ENCODE measurements at regions of chr5 and their contacts with region 1.

Region 1: DNA sequence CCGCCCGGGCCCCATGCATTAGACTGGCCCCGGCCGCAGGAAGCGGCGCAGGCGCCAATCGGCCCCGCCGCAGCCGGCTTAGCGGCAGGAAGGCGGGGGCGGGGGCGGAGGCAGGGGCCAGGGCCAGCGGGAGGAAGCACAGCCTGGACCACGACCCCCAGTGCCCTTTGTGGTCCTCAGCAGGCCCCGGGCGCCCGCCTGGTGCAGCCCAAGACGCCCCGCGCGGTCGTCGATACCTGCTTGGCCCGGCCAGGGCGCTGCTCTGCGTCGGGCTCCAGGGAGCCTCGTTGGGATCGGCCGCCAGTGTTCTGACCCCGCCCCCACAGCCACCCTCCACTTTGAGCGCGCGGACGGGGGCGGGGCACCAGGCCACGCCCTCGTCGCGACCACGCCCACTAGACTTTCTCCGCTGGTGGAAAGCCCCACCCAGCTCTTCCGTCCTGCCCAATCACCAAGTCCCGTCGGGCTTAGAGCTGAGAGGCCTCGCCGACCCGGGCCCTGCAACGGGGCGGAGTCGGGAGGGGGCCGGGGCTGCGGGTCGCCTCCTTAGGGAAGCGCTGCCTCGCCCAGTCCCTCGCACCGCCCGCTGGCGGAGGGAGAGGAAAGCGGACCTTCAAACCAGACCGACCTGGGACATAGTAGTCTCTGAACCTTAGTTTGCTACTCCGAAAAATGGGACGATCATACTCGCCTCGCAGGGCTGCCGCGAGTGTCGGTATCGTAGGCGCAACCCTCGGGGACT is at the start of gene PDLIM7:
- DNase-seq: peak; percentile 98
- ATAC-seq: peak; percentile 86
- H3K4me3 Mint-ChIP-seq: peak within 1 kb of the TSS; percentile 73
- H3K27ac Mint-ChIP-seq: peak within 1 kb of the TSS; percentile 37
- H3K4me1 Mint-ChIP-seq: peaks cover 31% of the 10 kb centered on the region
- H3K27me3 Mint-ChIP-seq: peaks cover 12% of the 10 kb centered on the region
- total RNA-seq, gene PDLIM7: 41.9 to 50.2 TPM

Region 2: DNA sequence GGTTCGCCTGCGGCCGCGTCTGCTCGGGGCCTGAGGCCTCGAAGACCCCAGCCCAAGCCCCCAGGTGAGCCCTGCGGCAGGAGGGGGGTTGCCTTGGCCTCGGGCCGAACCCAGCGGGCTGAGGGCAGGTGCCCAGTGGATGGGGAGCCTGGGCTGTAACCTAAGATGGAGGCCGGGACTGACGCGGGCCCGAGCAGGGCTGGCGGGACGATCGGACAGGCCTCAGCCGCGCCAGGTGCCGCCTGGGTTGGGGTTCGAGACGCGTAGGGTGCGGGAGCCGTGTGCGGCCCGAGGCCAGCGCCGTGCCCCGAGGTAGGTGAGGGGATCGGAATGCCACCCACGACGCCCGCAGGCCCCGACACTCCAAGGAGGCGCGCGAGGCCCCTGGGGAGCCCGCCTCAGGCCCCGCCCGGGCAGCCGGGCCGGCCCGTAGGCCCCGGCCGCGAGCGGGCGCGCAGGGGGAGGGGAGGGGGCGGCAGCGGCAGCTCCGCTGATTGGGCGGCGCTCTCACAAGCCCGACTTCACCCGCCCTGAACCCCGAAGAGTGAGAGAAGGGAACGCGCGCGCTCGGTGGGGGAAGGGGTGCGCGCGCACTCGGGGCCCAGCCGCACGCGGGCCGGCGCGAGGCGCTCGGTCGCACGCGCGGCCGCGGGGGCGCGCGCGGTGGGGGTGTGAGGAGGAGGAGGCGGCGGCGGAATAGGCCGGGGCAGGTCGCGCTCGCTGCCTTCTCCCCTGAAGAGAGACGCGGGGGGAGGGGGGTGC is 364.2 kb before region 1 on chr5 and contains the start of gene NSD1:
- CTCF ChIA-PET with region 1: interaction called, 3 read pairs
- POLR2A ChIA-PET with region 1: no interaction called
- intact Hi-C with region 1: loop called in 1 of 2 experiments (anchors 5 kb)
- DNase-seq: peak; percentile 95
- ATAC-seq: peak; percentile 81
- H3K4me3 Mint-ChIP-seq: peak within 1 kb of the TSS; percentile 91
- H3K27ac Mint-ChIP-seq: peak within 1 kb of the TSS; percentile 89
- H3K4me1 Mint-ChIP-seq: peaks cover 48% of the 10 kb centered on the region
- H3K27me3 Mint-ChIP-seq: no peaks in the 10 kb centered on the region
- total RNA-seq, gene NSD1: 65.6 to 68.2 TPM

Region 3: DNA sequence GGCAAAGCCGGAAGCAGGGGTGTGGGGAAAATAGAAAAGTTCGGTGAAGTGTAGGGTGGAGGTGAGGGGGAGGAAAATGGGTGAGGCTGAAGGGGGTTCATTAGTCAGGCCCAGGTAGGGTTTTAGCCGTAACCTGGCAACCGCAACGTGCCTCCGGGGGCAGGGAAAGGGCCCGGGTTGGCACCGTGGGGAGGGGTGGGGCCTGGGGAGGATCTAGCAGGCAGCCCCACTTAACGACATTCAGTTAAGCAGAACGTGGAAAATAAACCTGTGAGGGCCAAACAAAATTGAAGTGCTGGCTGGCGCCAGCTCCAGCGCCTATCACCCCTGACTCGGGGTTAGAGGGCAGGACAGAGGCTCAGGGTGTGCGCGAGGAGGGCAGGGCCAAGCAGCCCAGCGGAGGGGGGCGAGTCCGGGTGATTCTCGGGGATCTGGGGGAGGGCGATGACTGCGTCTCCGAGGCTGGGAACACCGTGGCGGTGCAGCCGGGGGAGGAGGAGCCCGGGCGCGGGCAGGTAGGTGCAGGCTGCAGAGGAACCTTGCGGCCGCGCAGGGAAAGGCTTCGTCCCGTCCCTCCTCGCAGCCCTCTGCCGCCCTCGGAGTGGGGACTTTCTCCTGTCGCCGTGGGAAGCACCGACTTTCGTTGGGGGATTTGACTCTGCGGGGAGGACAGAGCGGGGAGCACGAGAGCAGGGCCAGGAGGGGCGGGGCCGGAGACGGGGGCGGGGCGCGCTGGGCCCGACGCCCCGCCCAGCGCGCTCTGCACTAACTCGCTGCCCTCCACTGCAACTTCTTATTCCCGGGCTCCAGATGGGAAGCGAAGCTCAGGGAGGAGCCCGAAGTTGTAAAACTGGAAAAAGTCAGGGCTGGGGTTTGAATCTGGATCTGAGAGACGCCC is 134.6 kb before region 1 on chr5:
- CTCF ChIA-PET with region 1: interaction called, 3 read pairs
- POLR2A ChIA-PET with region 1: no interaction called
- intact Hi-C with region 1: loop called in 1 of 2 experiments (anchors 1 kb)
- DNase-seq: peak; percentile 84
- ATAC-seq: peak; percentile 68
- H3K4me3 Mint-ChIP-seq: peak overlapping the region; percentile 67
- H3K27ac Mint-ChIP-seq: peak overlapping the region; percentile 82
- H3K4me1 Mint-ChIP-seq: peaks cover 74% of the 10 kb centered on the region
- H3K27me3 Mint-ChIP-seq: no peaks in the 10 kb centered on the region

Region 4: GRCh38 chr5:177437623-177438022 is 59.8 kb before region 1 on chr5:
- CTCF ChIA-PET with region 1: no interaction called
- POLR2A ChIA-PET with region 1: no interaction called
- intact Hi-C with region 1: no loop called
- DNase-seq: no peak
- ATAC-seq: no peak
- H3K4me3 Mint-ChIP-seq: no peak overlapping the region
- H3K27ac Mint-ChIP-seq: no peak overlapping the region
- H3K4me1 Mint-ChIP-seq: peaks cover 70% of the 10 kb centered on the region
- H3K27me3 Mint-ChIP-seq: no peaks in the 10 kb centered on the region

Region 5: DNA sequence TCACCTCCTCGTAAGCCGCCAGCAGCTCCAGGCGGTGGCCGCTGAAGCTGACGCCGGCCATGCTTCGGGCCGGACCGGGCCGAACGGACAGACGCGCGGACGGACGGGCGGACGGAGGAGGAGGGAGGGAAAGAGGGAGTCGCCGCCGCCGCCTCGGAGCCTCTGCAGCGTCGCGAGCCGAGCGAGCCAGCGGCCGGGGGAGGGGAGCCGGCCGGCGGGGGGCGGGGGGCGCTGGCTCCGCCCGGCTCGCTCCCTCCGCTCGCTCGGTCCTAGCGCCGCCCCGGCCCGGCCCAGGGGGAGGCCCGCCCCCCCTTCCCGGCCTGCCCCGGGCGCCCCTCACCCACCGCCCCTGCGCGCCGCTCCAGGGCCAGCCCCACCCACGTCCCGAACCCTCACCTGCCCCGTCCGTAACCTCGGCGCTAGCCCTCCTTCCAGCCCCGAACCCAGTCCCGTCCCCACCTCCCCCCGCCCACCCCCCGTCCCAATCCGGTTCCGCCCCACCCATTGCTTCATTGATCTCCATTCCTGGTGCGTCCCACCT is 23.9 kb before region 1 on chr5 and contains the start of gene DBN1:
- CTCF ChIA-PET with region 1: interaction called, 8 read pairs
- POLR2A ChIA-PET with region 1: no interaction called
- intact Hi-C with region 1: loop called in 1 of 2 experiments (anchors 1 kb)
- DNase-seq: peak; percentile 62
- ATAC-seq: peak; percentile 44
- H3K4me3 Mint-ChIP-seq: peak within 1 kb of the TSS; percentile 65
- H3K27ac Mint-ChIP-seq: peak within 1 kb of the TSS; percentile 70
- H3K4me1 Mint-ChIP-seq: peaks cover 35% of the 10 kb centered on the region
- H3K27me3 Mint-ChIP-seq: peaks cover 4% of the 10 kb centered on the region
- total RNA-seq, gene DBN1: 29.5 to 41.2 TPM

Region 6: GRCh38 chr5:177516604-177517568 is 19.4 kb after region 1 on chr5 and contains the start of gene DDX41:
- CTCF ChIA-PET with region 1: interaction called, 3 read pairs
- POLR2A ChIA-PET with region 1: interaction called, 3 read pairs
- intact Hi-C with region 1: loop called in 1 of 2 experiments (anchors 1 kb)
- DNase-seq: peak; percentile 98
- ATAC-seq: peak; percentile 91
- H3K4me3 Mint-ChIP-seq: peak within 1 kb of the TSS; percentile 98
- H3K27ac Mint-ChIP-seq: peak within 1 kb of the TSS; percentile 96
- H3K4me1 Mint-ChIP-seq: peaks cover 48% of the 10 kb centered on the region
- H3K27me3 Mint-ChIP-seq: no peaks in the 10 kb centered on the region
- total RNA-seq, gene DDX41: 192 to 197 TPM

Region 7: GRCh38 chr5:177620560-177620959 is 123.1 kb after region 1 on chr5:
- CTCF ChIA-PET with region 1: no interaction called
- POLR2A ChIA-PET with region 1: no interaction called
- intact Hi-C with region 1: no loop called
- DNase-seq: no peak
- ATAC-seq: no peak
- H3K4me3 Mint-ChIP-seq: no peak overlapping the region
- H3K27ac Mint-ChIP-seq: no peak overlapping the region
- H3K4me1 Mint-ChIP-seq: no peaks in the 10 kb centered on the region
- H3K27me3 Mint-ChIP-seq: no peaks in the 10 kb centered on the region

Region 8: GRCh38 chr5:178058321-178059012 is 561.0 kb after region 1 on chr5:
- CTCF ChIA-PET with region 1: no interaction called
- POLR2A ChIA-PET with region 1: no interaction called
- intact Hi-C with region 1: no loop called
- DNase-seq: no peak
- ATAC-seq: no peak
- H3K4me3 Mint-ChIP-seq: no peak overlapping the region
- H3K27ac Mint-ChIP-seq: no peak overlapping the region
- H3K4me1 Mint-ChIP-seq: peaks cover 4% of the 10 kb centered on the region
- H3K27me3 Mint-ChIP-seq: no peaks in the 10 kb centered on the region